Activated naive CD4-positive, alpha-beta T cell treated with anti-CD3 and anti-CD28 coated beads for 36 hours (primary cell): ENCODE measurements at regions of chr2 and their contacts with region 1.

Region 1: GRCh38 chr2:171160119-171160955 is at the start of gene TLK1:
- DNase-seq: peak; percentile 75
- H3K4me3 Mint-ChIP-seq: peak within 1 kb of the TSS; percentile 90
- H3K27ac Mint-ChIP-seq: peak within 1 kb of the TSS; percentile 93
- H3K4me1 Mint-ChIP-seq: peaks cover 57% of the 10 kb centered on the region
- H3K27me3 Mint-ChIP-seq: no peaks in the 10 kb centered on the region
- total RNA-seq, gene TLK1: 54.5 to 55.9 TPM

Region 2: GRCh38 chr2:170063456-170064235 is 1096.7 kb before region 1 on chr2:
- CTCF ChIA-PET with region 1: no interaction called
- intact Hi-C with region 1: no loop called
- DNase-seq: no peak
- H3K4me3 Mint-ChIP-seq: no peak overlapping the region
- H3K27ac Mint-ChIP-seq: no peak overlapping the region
- H3K4me1 Mint-ChIP-seq: no peaks in the 10 kb centered on the region
- H3K27me3 Mint-ChIP-seq: no peaks in the 10 kb centered on the region

Region 3: GRCh38 chr2:170298115-170298514 is 862.2 kb before region 1 on chr2:
- CTCF ChIA-PET with region 1: no interaction called
- intact Hi-C with region 1: no loop called
- DNase-seq: no peak
- H3K4me3 Mint-ChIP-seq: no peak overlapping the region
- H3K27ac Mint-ChIP-seq: no peak overlapping the region
- H3K4me1 Mint-ChIP-seq: no peaks in the 10 kb centered on the region
- H3K27me3 Mint-ChIP-seq: peaks cover 11% of the 10 kb centered on the region

Region 4: GRCh38 chr2:170973492-170974303 is 186.6 kb before region 1 on chr2:
- CTCF ChIA-PET with region 1: interaction called, 8 read pairs
- intact Hi-C with region 1: loop called (anchors 1 kb)
- DNase-seq: peak; percentile 92
- H3K4me3 Mint-ChIP-seq: peak overlapping the region; percentile 66
- H3K27ac Mint-ChIP-seq: peak overlapping the region; percentile 48
- H3K4me1 Mint-ChIP-seq: peaks cover 9% of the 10 kb centered on the region
- H3K27me3 Mint-ChIP-seq: no peaks in the 10 kb centered on the region

Region 5: GRCh38 chr2:171102802-171103201 is 57.5 kb before region 1 on chr2:
- CTCF ChIA-PET with region 1: interaction called, 4 read pairs
- intact Hi-C with region 1: loop called (anchors 5 kb)
- DNase-seq: peak; percentile 16
- H3K4me3 Mint-ChIP-seq: no peak overlapping the region
- H3K27ac Mint-ChIP-seq: no peak overlapping the region
- H3K4me1 Mint-ChIP-seq: peaks cover 36% of the 10 kb centered on the region
- H3K27me3 Mint-ChIP-seq: no peaks in the 10 kb centered on the region

Region 6: GRCh38 chr2:171173089-171173488 is 12.8 kb after region 1 on chr2:
- CTCF ChIA-PET with region 1: interaction called, 4 read pairs
- intact Hi-C with region 1: loop called (anchors 1 kb)
- DNase-seq: peak; percentile 57
- H3K4me3 Mint-ChIP-seq: no peak overlapping the region
- H3K27ac Mint-ChIP-seq: no peak overlapping the region
- H3K4me1 Mint-ChIP-seq: peaks cover 14% of the 10 kb centered on the region
- H3K27me3 Mint-ChIP-seq: no peaks in the 10 kb centered on the region

Region 7: DNA sequence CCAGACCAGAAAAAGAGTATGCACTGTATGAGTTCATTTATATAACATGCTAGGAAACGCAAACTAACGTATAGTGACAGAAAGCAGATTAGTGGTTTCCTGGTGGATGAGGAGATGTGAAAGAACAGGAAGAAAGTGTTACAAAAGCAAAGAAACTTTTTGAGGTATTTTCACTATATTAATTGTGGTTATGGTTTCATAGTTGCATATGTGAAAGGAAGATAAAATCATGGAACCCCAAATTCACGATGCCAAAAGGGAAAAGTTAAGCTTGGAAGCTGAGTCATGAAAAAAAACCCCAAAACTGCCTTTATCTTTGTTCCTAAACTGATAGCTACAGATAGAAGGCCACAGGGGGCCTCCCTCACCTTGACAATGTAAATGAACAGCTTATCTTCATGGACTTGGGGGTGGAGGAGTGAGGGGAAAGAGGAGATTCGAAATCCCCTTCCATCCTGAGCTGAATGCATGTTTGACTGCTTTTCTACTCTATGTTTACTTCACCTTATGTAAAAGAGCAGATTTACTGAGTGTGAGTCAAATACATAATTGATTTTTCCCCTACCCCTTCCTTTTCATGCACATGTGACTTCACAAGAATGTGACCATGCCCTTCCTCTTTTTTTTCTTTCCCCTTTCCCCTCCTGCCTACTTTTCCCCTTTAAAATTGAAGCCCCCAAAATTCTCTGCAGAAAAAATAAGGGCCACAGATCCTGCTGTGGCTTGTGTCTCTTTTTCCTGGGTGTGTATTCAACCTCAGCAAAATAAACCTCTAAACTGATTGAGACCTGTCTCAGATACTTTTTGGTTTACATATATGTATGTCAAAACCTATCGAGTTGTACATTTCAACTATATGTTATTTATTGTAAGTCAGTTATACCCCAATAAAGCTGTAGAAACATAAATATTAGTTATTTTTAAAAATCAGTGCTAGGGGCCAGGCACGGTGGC is 100.4 kb after region 1 on chr2:
- CTCF ChIA-PET with region 1: no interaction called
- intact Hi-C with region 1: loop called (anchors 1 kb)
- DNase-seq: peak; percentile 70
- H3K4me3 Mint-ChIP-seq: no peak overlapping the region
- H3K27ac Mint-ChIP-seq: peak overlapping the region; percentile 44
- H3K4me1 Mint-ChIP-seq: peaks cover 35% of the 10 kb centered on the region
- H3K27me3 Mint-ChIP-seq: no peaks in the 10 kb centered on the region

Region 8: GRCh38 chr2:171893824-171894611 is 733.7 kb after region 1 on chr2 and contains the start of gene SLC25A12:
- CTCF ChIA-PET with region 1: no interaction called
- intact Hi-C with region 1: loop called (anchors 5 kb)
- DNase-seq: peak; percentile 78
- H3K4me3 Mint-ChIP-seq: peak within 1 kb of the TSS; percentile 100
- H3K27ac Mint-ChIP-seq: peak within 1 kb of the TSS; percentile 94
- H3K4me1 Mint-ChIP-seq: peaks cover 42% of the 10 kb centered on the region
- H3K27me3 Mint-ChIP-seq: no peaks in the 10 kb centered on the region
- total RNA-seq, gene SLC25A12: 15.0 to 17.4 TPM